H1 (cell line): ENCODE measurements at regions of chr17 and their contacts with region 1.

Region 1: DNA sequence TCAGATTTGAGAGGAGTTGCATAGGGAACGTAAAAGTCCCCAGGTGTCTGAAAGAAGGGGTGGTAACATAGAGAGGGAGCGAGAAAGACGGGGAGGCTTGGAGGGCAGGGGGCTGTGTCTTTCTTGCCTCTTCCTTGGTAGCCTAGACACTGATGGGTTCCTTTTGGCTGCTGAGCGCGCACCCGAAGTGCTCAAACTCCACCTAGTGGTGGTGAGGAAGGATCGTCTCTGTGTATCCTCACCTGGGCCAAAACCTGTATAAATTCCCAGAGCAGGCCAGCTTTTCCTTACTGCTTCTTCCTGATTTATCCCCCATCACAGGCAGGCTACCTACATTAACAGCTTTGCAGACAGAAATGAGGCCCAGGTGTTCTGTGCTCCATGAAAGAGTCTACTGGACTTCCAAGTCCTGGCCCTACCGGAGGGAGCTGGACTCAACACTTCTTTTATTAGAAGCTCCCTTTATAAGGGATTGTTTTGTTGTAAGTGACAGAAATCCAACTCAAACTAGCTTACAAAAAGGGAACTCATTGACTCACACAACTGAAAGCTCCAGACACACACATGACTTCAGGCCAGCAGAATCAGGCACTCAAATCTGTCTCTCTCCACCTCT is 5.5 kb upstream of the SLC25A35 start:
- DNase-seq: peak; percentile 51 to 63
- H3K4me3 ChIP-seq: no peak overlapping the region
- H3K27ac ChIP-seq: no peak overlapping the region
- H3K4me1 ChIP-seq: no peaks in the 10 kb centered on the region
- H3K27me3 ChIP-seq: no peaks in the 10 kb centered on the region; a peak in 1 of 7 replicates
- CTCF ChIP-seq: peak; percentile 83 to 95 (median 89)
- EP300 ChIP-seq: no peak
- POLR2A ChIP-seq: no peak
- RAD21 ChIP-seq: peak; percentile 85 to 87

Region 2: GRCh38 chr17:8248751-8249607 is 51.8 kb before region 1 on chr17 and contains the start of gene PFAS:
- CTCF ChIA-PET with region 1: interaction called, 8 read pairs
- POLR2A ChIA-PET with region 1: interaction called, 1,521 read pairs
- DNase-seq: peak; percentile 77 to 99
- H3K4me3 ChIP-seq: peak within 1 kb of the TSS; percentile 93 to 99 (median 96)
- H3K27ac ChIP-seq: peak within 1 kb of the TSS; percentile 94
- H3K4me1 ChIP-seq: peaks cover 0 to 6% (median 3%) of the 10 kb centered on the region in 4 experiments; a peak in 5 of 7 replicates
- H3K27me3 ChIP-seq: no peaks in the 10 kb centered on the region
- CTCF ChIP-seq: no peak
- EP300 ChIP-seq: no peak
- POLR2A ChIP-seq: peak; percentile 71 to 94
- RAD21 ChIP-seq: no peak
- total RNA-seq, gene PFAS: 238 and 248 TPM in 2 replicates

Region 3: GRCh38 chr17:8314797-8315763 is 14.3 kb after region 1 on chr17:
- CTCF ChIA-PET with region 1: interaction called, 21 read pairs
- POLR2A ChIA-PET with region 1: interaction called, 6 read pairs
- DNase-seq: no peak
- H3K4me3 ChIP-seq: peak overlapping the region; percentile 46 to 79 (median 66)
- H3K27ac ChIP-seq: no peak overlapping the region
- H3K4me1 ChIP-seq: peaks cover 0 to 16% (median 6%) of the 10 kb centered on the region in 4 experiments; a peak in 5 of 7 replicates
- H3K27me3 ChIP-seq: peaks cover 3 to 28% (median 23%) of the 10 kb centered on the region in 4 experiments
- CTCF ChIP-seq: no peak
- EP300 ChIP-seq: no peak
- POLR2A ChIP-seq: no peak
- RAD21 ChIP-seq: no peak

Region 4: DNA sequence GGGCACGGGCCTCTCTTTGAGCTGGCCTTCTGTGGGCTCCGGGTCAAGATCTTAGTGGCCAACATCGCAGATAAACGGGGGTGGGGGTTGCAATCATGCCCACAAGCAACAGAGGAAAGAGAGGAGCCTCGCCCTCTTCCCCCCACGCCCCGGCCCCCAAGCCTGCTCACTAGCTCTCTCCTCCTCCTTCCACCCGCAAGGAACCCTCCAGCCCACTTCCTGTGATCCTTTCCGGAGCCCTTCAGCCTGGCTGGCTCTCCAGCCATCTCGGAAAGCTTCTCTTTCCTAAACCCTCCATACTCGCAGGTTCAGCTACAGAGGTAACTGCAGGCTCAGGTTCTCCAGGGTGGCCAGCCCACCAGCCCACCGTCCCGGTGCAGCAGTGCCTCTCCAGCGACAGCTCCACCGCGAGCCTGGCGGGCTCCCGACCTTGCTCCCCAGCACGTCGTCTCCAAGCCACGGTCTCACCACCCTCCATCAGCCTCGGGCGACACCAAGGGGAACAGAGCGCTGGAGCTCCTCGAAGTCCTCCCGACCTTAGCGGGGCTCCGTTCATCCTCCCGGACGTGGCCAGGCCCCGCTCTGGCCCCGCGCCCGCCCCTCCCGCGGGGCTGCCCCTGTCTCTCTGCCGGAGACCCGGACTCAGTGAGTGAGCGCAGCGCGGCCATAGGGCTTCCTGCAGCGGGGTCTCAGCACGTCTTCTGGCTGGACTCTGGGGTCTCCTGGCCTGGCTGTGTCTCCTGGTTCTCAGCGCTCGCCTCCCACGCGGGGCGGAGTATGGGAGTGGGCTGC is 26.0 kb after region 1 on chr17:
- CTCF ChIA-PET with region 1: interaction called, 19 read pairs
- POLR2A ChIA-PET with region 1: interaction called, 5 read pairs
- DNase-seq: peak in 1 of 2 experiments; percentile 74
- H3K4me3 ChIP-seq: peak overlapping the region; percentile 56 to 73 (median 62)
- H3K27ac ChIP-seq: no peak overlapping the region
- H3K4me1 ChIP-seq: peaks cover 0 to 11% (median 5%) of the 10 kb centered on the region in 4 experiments; a peak in 5 of 7 replicates
- H3K27me3 ChIP-seq: peaks cover 2 to 20% (median 17%) of the 10 kb centered on the region in 4 experiments; a peak in 6 of 7 replicates
- CTCF ChIP-seq: no peak
- EP300 ChIP-seq: no peak
- POLR2A ChIP-seq: 0 out of 3 replicates have a peak, but pooled peaks of 1 of the 2 experiments have one; percentile 33
- RAD21 ChIP-seq: no peak